ENCODE measurements at regions of chr17 and their contacts with region 1.

Region 1: GRCh38 chr17:794876-795275 is 12.7 kb downstream of the MRM3 start:
- DNase-seq: peak; percentile 91
- ATAC-seq: peak; percentile 72

Region 2: GRCh38 chr17:859061-859823 is 64.4 kb after region 1 on chr17:
- intact Hi-C with region 1: loop called (anchors 5 kb)
- DNase-seq: no peak
- ATAC-seq: peak; percentile 40

Region 3: DNA sequence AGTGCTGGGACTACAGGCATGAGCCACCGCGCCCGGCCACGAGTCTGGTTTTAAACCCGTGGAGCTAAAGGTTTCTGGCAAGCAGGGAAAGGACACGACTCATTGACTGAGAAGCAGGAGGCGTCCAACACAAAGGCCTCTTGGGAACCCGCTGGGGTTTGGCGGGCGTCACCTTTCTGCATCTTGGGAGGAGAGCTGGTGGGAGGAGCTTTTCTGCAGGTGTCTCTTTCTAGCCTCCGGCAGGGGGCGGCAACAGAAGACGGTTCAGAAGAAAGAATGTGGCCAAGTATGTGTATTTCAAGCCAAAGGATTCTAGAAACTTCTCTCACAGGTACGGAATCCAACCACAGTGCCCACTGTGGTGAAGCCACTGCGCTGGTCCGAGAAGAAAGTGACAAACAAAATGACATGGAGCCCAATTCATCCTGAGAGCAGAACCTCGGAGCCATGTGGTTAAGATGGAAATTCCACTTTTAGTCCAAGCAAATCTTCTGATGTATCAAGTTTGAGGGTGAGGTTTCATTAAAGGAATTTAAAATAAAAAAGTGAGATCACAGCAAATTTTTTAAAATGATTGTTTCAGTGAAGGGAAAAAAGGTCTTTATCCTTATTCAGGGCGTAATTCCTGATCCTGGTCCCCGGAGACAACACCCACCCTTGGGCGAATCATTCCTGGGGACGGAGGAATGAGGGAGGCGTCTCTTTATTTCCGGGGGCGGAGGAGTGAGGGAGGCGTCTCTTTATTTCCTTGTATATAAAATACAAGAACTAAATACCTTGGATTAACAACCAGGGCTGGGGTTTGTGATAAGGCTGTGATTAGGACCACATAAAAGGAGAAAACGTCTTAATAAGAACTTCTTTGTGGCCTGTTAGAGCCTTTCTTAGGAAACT is 84.9 kb after region 1 on chr17:
- intact Hi-C with region 1: loop called (anchors 2 kb)
- DNase-seq: peak; percentile 84
- ATAC-seq: peak; percentile 54

Region 4: GRCh38 chr17:1055751-1056645 is 261.1 kb after region 1 on chr17:
- intact Hi-C with region 1: loop called (anchors 10 kb)
- DNase-seq: peak; percentile 84
- ATAC-seq: peak; percentile 82

Measured in Right ventricle myocardium inferior (tissue), 1 donor.